Posterior vena cava (tissue), 2 donors: ENCODE measurements at regions of chr6 and their contacts with region 1.

Region 1: GRCh38 chr6:28651161-28651560 is 125.5 kb downstream of the GPX5 start:
- DNase-seq: no peak

Region 2: DNA sequence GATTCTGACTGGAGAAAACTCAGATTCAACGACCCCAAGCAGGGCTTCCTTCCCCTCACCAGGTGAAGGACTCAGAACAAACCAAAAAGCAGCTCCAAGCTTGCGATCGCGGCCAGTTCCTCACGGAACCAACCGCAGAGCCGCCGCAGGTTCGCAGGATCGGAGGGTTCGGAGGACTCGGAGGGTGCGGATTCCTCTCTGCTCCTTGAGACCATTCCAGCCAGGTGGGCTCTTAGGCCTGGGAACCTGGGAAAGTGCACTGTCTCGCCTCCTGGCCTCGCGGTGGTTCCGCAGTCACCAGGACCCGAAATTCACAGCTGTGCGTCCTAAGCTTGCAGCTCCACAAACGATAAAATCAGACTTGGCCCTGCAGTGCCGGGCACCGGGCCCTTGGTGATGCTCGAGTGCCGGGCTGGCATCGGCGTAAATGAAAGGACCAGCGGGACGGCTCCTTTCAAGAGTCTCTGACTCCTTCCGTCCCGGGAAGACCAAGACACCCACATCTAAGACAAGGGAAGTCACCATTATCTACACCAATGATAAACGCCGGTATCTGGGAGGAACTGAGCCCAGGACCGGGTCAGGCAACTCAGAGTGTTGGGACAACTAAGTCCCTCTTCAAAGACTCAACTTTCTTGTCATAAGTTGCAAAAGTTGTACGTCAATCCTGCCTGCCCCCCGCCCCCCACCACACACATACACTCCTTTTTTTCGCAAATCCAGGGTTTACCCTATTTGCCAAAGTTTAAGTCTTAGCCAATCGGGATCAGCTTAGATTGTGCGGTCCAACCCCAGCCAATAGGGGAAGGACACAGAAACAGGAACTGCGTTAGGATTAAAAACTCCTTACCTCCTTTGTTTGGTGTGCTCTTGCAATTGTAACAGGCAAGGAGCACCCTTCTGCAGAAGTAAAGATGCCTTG is 1473.4 kb before region 1 on chr6:
- intact Hi-C with region 1: loop called in 1 of 2 experiments (anchors 5 kb)
- DNase-seq: peak; percentile 95

Region 3: GRCh38 chr6:28586962-28587745 is 64.0 kb before region 1 on chr6:
- intact Hi-C with region 1: no loop called
- DNase-seq: no peak

Region 4: GRCh38 chr6:28673800-28674671 is 22.9 kb after region 1 on chr6:
- intact Hi-C with region 1: no loop called
- DNase-seq: no peak